ENCODE measurements at regions of chr17 and their contacts with region 1.

Region 1: DNA sequence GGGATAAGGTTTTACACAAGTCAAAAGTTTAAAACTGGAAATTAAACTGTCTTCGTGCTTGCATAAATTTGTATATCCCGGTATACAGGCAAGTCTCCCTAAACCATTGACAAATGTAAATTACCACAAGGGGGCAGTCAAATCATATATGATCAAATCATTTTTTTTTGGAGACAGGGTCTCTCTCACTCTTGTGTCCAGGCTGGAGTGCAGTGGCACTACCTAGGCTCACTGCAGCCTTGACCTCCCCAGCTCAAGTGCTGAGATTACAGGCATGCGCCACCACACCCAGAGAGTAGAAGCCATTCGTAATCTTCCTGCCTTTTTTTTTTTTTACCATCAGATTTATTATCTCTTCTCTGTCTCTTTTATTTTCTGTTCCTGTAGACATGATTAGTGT is 18.5 kb downstream of the TOP2A start:
- DNase-seq: peak in 1 of 2 experiments; percentile 32
- H3K4me3 ChIP-seq: no peak overlapping the region
- H3K4me1 ChIP-seq: no peaks in the 10 kb centered on the region
- H3K27me3 ChIP-seq: no peaks in the 10 kb centered on the region

Region 2: DNA sequence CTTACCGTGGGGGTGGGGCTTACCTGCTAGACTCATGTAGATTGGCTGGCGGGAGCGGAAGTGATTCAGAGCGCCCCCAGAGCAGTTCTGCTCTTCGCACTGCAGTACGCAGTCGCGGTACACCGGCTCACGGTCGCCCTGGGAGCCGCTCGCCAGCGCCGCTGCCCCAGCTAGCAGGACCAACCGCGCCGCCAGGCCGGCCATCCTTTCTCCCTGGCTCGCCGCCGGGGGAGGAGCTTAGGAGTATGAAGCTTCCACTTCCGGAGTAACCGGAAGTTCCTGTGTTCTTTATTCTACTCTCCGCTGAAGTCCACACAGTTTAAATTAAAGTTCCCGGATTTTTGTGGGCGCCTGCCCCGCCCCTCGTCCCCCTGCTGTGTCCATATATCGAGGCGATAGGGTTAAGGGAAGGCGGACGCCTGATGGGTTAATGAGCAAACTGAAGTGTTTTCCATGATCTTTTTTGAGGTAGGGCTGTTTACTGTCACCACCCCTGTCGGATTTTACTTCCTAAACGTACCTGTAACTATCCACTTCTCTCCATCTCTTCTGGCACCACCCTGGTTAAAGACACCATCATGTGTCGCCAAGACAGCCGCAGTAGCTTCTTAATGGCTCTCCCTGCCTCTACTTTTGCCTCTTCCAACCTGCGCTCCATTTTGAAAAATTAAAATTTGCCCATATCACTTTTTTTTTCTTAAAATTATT is 711.2 kb before region 1 on chr17 and contains the start of gene PGAP3:
- in situ Hi-C with region 1: no loop called
- DNase-seq: peak; percentile 86 to 94
- H3K4me3 ChIP-seq: peak within 1 kb of the TSS; percentile 57
- H3K4me1 ChIP-seq: peaks cover 6% of the 10 kb centered on the region
- H3K27me3 ChIP-seq: no peaks in the 10 kb centered on the region

Region 3: DNA sequence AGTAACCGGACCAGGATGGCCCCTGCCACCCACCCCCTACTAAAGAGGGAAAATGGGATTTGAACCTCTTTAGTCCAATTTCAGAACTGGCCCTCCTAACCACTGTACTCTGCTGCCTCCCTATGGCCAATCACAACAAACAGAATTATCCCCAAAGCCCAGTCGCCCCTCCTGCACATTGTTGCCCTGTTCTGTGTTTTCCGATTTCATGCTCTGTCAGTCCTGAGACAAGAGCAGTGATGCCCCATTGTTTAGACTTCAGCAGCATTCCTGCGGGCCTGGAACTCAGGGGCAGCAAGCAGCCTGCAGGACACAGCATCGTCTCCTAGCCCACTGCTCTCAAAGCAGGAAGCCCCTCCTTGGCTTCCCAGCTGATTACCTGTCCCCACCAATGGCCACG is 1486.5 kb after region 1 on chr17:
- in situ Hi-C with region 1: loop called (anchors 25 kb)
- DNase-seq: peak in 1 of 2 experiments; percentile 22
- H3K4me3 ChIP-seq: no peak overlapping the region
- H3K4me1 ChIP-seq: no peaks in the 10 kb centered on the region
- H3K27me3 ChIP-seq: no peaks in the 10 kb centered on the region

Measured in HAP-1 (cell line).